Activated CD4-positive, alpha-beta memory T cell treated with anti-CD3 and anti-CD28 coated beads for 36 hours (primary cell): ENCODE measurements at regions of chr1 and their contacts with region 1.

Region 1: GRCh38 chr1:160837558-160838205 is 25.0 kb downstream of the CD244 start:
- DNase-seq: peak; percentile 89
- H3K4me3 Mint-ChIP-seq: peak overlapping the region; percentile 9
- H3K27ac Mint-ChIP-seq: peak overlapping the region; percentile 89
- H3K4me1 Mint-ChIP-seq: peaks cover 43% of the 10 kb centered on the region
- H3K27me3 Mint-ChIP-seq: no peaks in the 10 kb centered on the region

Region 2: DNA sequence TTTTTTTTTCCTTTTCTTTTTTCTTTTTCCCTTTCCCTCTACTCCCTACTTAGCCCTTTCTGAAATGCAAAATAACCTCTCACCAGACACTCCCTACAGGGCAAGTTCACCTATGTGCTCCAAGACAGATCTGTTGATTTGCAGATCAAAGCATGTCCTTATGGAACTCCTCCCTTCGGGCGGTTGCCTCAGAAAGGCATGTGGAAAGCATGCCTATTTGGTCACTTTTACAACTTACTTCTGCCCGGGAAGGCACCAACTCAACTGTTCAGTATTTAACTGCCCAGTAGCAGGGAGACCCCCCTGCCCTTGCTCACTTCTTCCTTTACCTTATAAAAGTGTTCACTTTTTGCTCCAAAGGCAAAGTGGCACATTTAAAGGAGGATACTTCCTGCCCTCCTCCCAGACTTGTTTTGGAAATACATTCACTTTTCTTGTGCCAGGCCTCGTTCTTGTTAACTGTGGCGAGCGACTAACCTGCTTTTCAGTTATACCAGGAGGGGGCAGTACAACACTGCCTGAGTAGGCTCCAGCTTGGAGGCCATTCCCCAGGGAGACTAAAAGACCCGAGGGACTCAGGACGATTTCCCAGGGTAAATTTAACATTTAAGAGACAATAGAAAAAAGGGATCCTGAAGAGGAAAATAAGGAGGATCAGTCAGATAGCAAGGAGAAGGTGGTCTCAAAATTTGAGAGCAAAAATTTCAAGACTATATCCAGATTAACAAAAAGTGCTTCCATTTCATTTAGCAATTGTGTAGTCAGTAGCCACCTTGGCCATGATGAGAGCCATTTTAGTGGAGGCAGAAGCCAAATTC is 111.0 kb before region 1 on chr1:
- CTCF ChIA-PET with region 1: interaction called, 40 read pairs
- POLR2A ChIA-PET with region 1: no interaction called
- intact Hi-C with region 1: loop called (anchors 2 kb)
- DNase-seq: peak; percentile 72
- H3K4me3 Mint-ChIP-seq: no peak overlapping the region
- H3K27ac Mint-ChIP-seq: no peak overlapping the region
- H3K4me1 Mint-ChIP-seq: peaks cover 24% of the 10 kb centered on the region
- H3K27me3 Mint-ChIP-seq: no peaks in the 10 kb centered on the region

Region 3: GRCh38 chr1:160795951-160796383 is 41.7 kb before region 1 on chr1 and contains the start of gene LY9:
- CTCF ChIA-PET with region 1: interaction called, 9 read pairs
- POLR2A ChIA-PET with region 1: interaction called, 3 read pairs
- intact Hi-C with region 1: loop called (anchors 2 kb)
- DNase-seq: peak; percentile 90
- H3K4me3 Mint-ChIP-seq: peak within 1 kb of the TSS; percentile 77
- H3K27ac Mint-ChIP-seq: peak within 1 kb of the TSS; percentile 88
- H3K4me1 Mint-ChIP-seq: peaks cover 61% of the 10 kb centered on the region
- H3K27me3 Mint-ChIP-seq: no peaks in the 10 kb centered on the region
- total RNA-seq, gene LY9: 4.8 to 4.9 TPM

Region 4: GRCh38 chr1:160884579-160884978 is 46.9 kb after region 1 on chr1:
- CTCF ChIA-PET with region 1: interaction called, 23 read pairs
- POLR2A ChIA-PET with region 1: no interaction called
- intact Hi-C with region 1: no loop called
- DNase-seq: no peak
- H3K4me3 Mint-ChIP-seq: no peak overlapping the region
- H3K27ac Mint-ChIP-seq: no peak overlapping the region
- H3K4me1 Mint-ChIP-seq: no peaks in the 10 kb centered on the region
- H3K27me3 Mint-ChIP-seq: peaks cover 3% of the 10 kb centered on the region

Region 5: DNA sequence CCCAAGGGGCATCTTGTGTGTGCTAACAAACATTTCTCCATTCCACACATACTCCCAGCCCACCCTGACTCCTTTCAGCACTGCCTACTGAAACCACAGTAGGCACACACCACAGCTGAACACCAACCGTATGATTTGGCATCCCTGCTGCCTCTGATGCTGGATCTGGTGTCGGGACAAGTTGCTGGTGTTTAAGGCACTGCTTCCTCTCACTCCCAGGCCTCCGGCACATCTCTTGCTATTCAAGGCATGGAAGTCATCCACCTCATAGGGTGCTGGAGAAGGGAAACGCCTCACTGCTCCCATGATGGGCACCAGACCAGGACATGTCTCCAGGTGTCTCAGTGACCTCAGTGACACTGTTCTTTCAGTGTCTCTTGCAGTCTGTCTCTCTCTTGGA is 119.3 kb after region 1 on chr1:
- CTCF ChIA-PET with region 1: interaction called, 296 read pairs
- POLR2A ChIA-PET with region 1: interaction called, 4 read pairs
- intact Hi-C with region 1: no loop called
- DNase-seq: no peak
- H3K4me3 Mint-ChIP-seq: no peak overlapping the region
- H3K27ac Mint-ChIP-seq: no peak overlapping the region
- H3K4me1 Mint-ChIP-seq: peaks cover 2% of the 10 kb centered on the region
- H3K27me3 Mint-ChIP-seq: no peaks in the 10 kb centered on the region

Region 6: GRCh38 chr1:161132410-161133219 is 294.9 kb after region 1 on chr1 and contains the start of gene DEDD:
- CTCF ChIA-PET with region 1: interaction called, 3 read pairs
- POLR2A ChIA-PET with region 1: no interaction called
- intact Hi-C with region 1: loop called (anchors 5 kb)
- DNase-seq: peak; percentile 96
- H3K4me3 Mint-ChIP-seq: no peak within 1 kb of the TSS
- H3K27ac Mint-ChIP-seq: no peak within 1 kb of the TSS
- H3K4me1 Mint-ChIP-seq: peaks cover 43% of the 10 kb centered on the region
- H3K27me3 Mint-ChIP-seq: no peaks in the 10 kb centered on the region
- total RNA-seq, gene DEDD: 35.0 to 40.2 TPM